Naive thymus-derived CD4-positive, alpha-beta T cell (primary cell): ENCODE measurements at regions of chr15 and their contacts with region 1.

Region 1: GRCh38 chr15:30903497-30904201 is at the start of gene FAN1:
- DNase-seq: peak; percentile 52 to 81 (median 68)
- ATAC-seq: peak; percentile 92
- H3K4me3 ChIP-seq: peak within 1 kb of the TSS; percentile 96
- H3K4me3 Mint-ChIP-seq: peak within 1 kb of the TSS; percentile 93 to 100 (median 96)
- H3K27ac ChIP-seq: peak within 1 kb of the TSS; percentile 47
- H3K27ac Mint-ChIP-seq: peak within 1 kb of the TSS; percentile 75 to 93 (median 88)
- H3K4me1 ChIP-seq: no peaks in the 10 kb centered on the region
- H3K4me1 Mint-ChIP-seq: peaks cover 19 to 59% (median 37%) of the 10 kb centered on the region in 7 donors
- H3K27me3 ChIP-seq: no peaks in the 10 kb centered on the region
- H3K27me3 Mint-ChIP-seq: no peaks in the 10 kb centered on the region
- total RNA-seq, gene FAN1: 24.0 to 29.5 (median 28.2) TPM

Region 2: GRCh38 chr15:30882849-30883433 is 20.7 kb before region 1 on chr15:
- CTCF ChIA-PET with region 1: no interaction called
- POLR2A ChIA-PET with region 1: no interaction called
- intact Hi-C with region 1: loop called in 1 of 2 experiments (anchors 2 kb)
- DNase-seq: peak in 7 of 9 donors; percentile 16 to 41 (median 31)
- ATAC-seq: peak; percentile 76
- H3K4me3 ChIP-seq: no peak overlapping the region
- H3K4me3 Mint-ChIP-seq: peak overlapping the region in 5 of 10 donors; percentile 7 to 58 (median 28)
- H3K27ac ChIP-seq: no peak overlapping the region
- H3K27ac Mint-ChIP-seq: peak overlapping the region in 4 of 9 donors; percentile 10 to 50 (median 48)
- H3K4me1 ChIP-seq: no peaks in the 10 kb centered on the region
- H3K4me1 Mint-ChIP-seq: peaks cover 2 to 34% (median 13%) of the 10 kb centered on the region in 7 donors
- H3K27me3 ChIP-seq: no peaks in the 10 kb centered on the region
- H3K27me3 Mint-ChIP-seq: no peaks in the 10 kb centered on the region